CD14-positive monocyte (primary cell): ENCODE measurements at regions of chr6 and their contacts with region 1.

Region 1: GRCh38 chr6:116371120-116371917 is 572 bp downstream of the DSE start:
- DNase-seq: peak; percentile 64 to 75 (median 72)
- H3K4me3 ChIP-seq: peak overlapping the region; percentile 73 to 90 (median 81)
- H3K4me3 Mint-ChIP-seq: peak overlapping the region; percentile 93 to 95
- H3K27ac ChIP-seq: peak overlapping the region; percentile 87 to 89
- H3K27ac Mint-ChIP-seq: peak overlapping the region; percentile 90 to 94 (median 92)
- H3K4me1 ChIP-seq: peaks cover 55 to 67% of the 10 kb centered on the region in 2 donors
- H3K4me1 Mint-ChIP-seq: peaks cover 59% of the 10 kb centered on the region
- H3K27me3 ChIP-seq: no peaks in the 10 kb centered on the region
- H3K27me3 Mint-ChIP-seq: no peaks in the 10 kb centered on the region
- CTCF ChIP-seq: no peak

Region 2: DNA sequence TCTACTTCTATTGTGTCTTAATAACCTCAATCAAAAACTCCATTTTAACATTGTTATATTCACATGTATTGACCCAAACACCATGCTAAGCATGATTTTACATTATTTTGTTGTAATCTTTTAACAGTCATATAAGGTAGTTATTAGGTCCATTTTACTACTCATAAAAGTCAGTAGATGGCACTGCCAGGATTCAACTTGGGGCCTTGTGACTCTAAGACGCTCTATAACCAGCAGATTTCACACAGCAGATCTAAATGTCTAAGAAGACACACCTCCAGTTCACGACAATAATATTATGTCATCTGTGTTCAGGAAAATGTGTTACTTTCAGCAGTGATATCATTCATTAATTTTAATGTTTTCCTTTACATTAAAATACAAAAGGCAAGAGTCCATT is 398.6 kb before region 1 on chr6:
- intact Hi-C with region 1: no loop called
- DNase-seq: no peak
- H3K4me3 ChIP-seq: no peak overlapping the region
- H3K4me3 Mint-ChIP-seq: no peak overlapping the region
- H3K27ac ChIP-seq: no peak overlapping the region
- H3K27ac Mint-ChIP-seq: no peak overlapping the region
- H3K4me1 ChIP-seq: no peaks in the 10 kb centered on the region
- H3K4me1 Mint-ChIP-seq: no peaks in the 10 kb centered on the region
- H3K27me3 ChIP-seq: no peaks in the 10 kb centered on the region
- H3K27me3 Mint-ChIP-seq: peaks cover 0 to 2% (median 0%) of the 10 kb centered on the region in 3 donors
- CTCF ChIP-seq: no peak

Region 3: GRCh38 chr6:116387374-116387773 is 16.1 kb after region 1 on chr6:
- intact Hi-C with region 1: loop called (anchors 2 kb)
- DNase-seq: peak; percentile 89 to 99 (median 94)
- H3K4me3 ChIP-seq: peak overlapping the region in 1 of 3 experiments; percentile 13
- H3K4me3 Mint-ChIP-seq: peak overlapping the region; percentile 21 to 85
- H3K27ac ChIP-seq: peak overlapping the region; percentile 36 to 91
- H3K27ac Mint-ChIP-seq: peak overlapping the region; percentile 93 to 99 (median 99)
- H3K4me1 ChIP-seq: peaks cover 62 to 74% of the 10 kb centered on the region in 2 donors
- H3K4me1 Mint-ChIP-seq: peaks cover 62% of the 10 kb centered on the region
- H3K27me3 ChIP-seq: no peaks in the 10 kb centered on the region
- H3K27me3 Mint-ChIP-seq: peaks cover 0 to 2% (median 0%) of the 10 kb centered on the region in 3 donors
- CTCF ChIP-seq: no peak

Region 4: GRCh38 chr6:116405138-116405537 is 33.8 kb after region 1 on chr6:
- intact Hi-C with region 1: loop called in 1 of 2 experiments (anchors 5 kb)
- DNase-seq: no peak
- H3K4me3 ChIP-seq: no peak overlapping the region
- H3K4me3 Mint-ChIP-seq: peak overlapping the region; percentile 28 to 39
- H3K27ac ChIP-seq: peak overlapping the region; percentile 36 to 61
- H3K27ac Mint-ChIP-seq: peak overlapping the region; percentile 36 to 78 (median 70)
- H3K4me1 ChIP-seq: peaks cover 28 to 32% of the 10 kb centered on the region in 2 donors
- H3K4me1 Mint-ChIP-seq: peaks cover 43% of the 10 kb centered on the region
- H3K27me3 ChIP-seq: no peaks in the 10 kb centered on the region
- H3K27me3 Mint-ChIP-seq: no peaks in the 10 kb centered on the region
- CTCF ChIP-seq: no peak